HEK293 (cell line): ENCODE measurements at regions of chrX and their contacts with region 1.

Region 1: DNA sequence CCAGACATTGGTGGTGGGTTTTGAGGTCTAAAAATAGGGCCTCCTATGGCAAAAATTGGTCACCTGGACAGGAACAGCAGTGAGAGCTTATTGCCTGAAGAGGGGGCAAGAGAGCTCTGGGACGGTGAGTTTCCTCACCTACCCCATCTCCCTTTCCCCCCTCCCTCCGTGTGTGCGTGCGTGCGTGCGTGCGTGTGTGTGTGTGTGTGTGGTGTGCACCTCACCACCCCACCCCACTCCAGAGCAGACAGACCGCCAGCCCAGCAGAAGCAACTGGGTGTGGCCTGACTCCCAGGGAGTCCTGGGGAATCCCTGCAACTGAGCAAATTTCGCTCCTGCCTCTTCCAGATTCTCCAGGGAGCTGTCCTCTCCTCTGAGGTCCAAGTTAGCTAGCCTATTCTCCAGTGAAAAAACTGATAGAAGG is 44.7 kb downstream of the PRPS1 start:
- H3K4me3 ChIP-seq: no peak overlapping the region
- H3K27ac ChIP-seq: peak overlapping the region; percentile 32; the same call in 1 of the 2 replicates
- H3K4me1 ChIP-seq: peaks cover 21% of the 10 kb centered on the region
- CTCF ChIP-seq: peak; percentile 77

Region 2: GRCh38 chrX:107442901-107443527 is 230.0 kb before region 1 on chrX:
- CTCF ChIA-PET with region 1: no interaction called
- POLR2A ChIA-PET with region 1: no interaction called
- H3K4me3 ChIP-seq: no peak overlapping the region
- H3K27ac ChIP-seq: no peak overlapping the region
- H3K4me1 ChIP-seq: no peaks in the 10 kb centered on the region
- CTCF ChIP-seq: no peak

Region 3: DNA sequence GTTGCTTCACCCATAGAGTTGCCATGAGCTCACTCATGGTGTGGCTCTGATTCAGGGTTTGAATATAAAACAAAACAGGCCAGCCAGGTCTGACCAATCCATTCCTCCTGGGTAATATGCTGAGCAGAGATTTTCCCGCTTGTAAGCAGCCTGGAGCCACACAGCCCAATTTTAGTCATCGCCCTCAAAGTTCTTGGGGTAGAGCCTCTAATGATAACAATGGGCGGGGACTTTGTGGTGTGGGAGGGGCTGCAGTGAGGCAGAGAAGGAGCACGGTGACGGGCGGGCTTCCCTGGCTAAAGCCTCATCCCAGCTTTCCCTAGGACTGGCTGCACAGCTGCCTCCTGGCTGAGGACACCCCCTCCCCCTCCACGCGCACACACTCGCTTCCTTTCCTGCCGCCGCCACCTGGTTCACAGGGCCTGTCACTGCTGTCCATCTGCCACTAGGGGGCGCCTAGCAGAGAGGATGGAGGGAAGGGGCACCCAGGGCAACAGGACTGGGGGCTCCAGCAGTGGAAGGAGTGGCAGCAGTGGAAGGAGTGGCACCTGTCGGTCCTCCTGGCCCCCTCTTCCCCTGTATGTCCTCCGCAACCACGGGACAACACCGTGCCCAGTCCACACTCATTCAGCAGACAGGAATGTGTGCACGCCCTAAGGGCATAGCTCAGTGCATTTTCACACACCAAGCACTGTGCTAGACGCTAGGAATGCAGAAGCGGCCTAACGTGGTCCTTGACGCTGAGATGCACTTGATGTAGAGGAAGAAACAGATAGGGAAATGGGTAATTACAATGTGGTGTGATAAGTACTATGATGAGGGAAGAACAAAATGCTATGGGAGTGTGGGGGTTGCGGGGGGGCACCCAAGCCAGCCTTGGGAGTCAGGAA is 17.9 kb before region 1 on chrX:
- CTCF ChIA-PET with region 1: interaction called, 28 read pairs
- POLR2A ChIA-PET with region 1: interaction called, 3 read pairs
- H3K4me3 ChIP-seq: no peak overlapping the region
- H3K27ac ChIP-seq: no peak overlapping the region
- H3K4me1 ChIP-seq: no peaks in the 10 kb centered on the region
- CTCF ChIP-seq: peak; percentile 76

Region 4: GRCh38 chrX:107731831-107732502 is 59.0 kb after region 1 on chrX:
- CTCF ChIA-PET with region 1: interaction called, 13 read pairs
- POLR2A ChIA-PET with region 1: interaction called, 6 read pairs
- H3K4me3 ChIP-seq: no peak overlapping the region
- H3K27ac ChIP-seq: peak overlapping the region; percentile 70
- H3K4me1 ChIP-seq: peaks cover 27% of the 10 kb centered on the region
- CTCF ChIP-seq: no peak

Region 5: DNA sequence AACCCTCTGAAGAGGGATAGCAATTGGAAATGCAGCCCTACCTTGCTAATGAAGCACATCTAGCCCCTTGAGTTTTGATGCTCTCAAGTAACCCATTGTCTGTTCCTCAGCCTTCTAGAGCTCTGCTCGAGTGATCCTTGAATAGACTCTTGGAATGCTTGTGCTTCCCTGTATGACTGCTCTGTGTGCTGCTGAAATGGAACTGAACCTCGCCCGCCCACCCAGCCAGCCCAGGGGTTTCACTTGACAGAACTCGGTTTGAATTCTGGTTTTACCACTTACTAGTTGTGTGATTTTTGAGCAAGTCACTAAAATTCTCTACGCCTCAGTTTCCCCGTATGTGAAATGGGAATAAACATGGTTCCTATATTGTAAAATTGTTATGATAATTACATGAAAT is 229.8 kb after region 1 on chrX:
- CTCF ChIA-PET with region 1: no interaction called
- POLR2A ChIA-PET with region 1: no interaction called
- H3K4me3 ChIP-seq: no peak overlapping the region
- H3K27ac ChIP-seq: no peak overlapping the region
- H3K4me1 ChIP-seq: no peaks in the 10 kb centered on the region
- CTCF ChIP-seq: no peak